K562 (cell line): ENCODE measurements at regions of chr11 and their contacts with region 1.

Region 1: GRCh38 chr11:66222358-66223149 is 45.9 kb upstream of the RAB1B start:
- DNase-seq: peak; percentile 88 to 95 (median 92)
- ATAC-seq: peak; percentile 97
- H3K4me3 ChIP-seq: no peak overlapping the region
- H3K27ac ChIP-seq: no peak overlapping the region; the same call in 2 of the 3 replicates
- H3K4me1 ChIP-seq: peaks cover 7 to 14% of the 10 kb centered on the region in 2 experiments; a peak in 3 of 5 replicates
- H3K27me3 ChIP-seq: no peaks in the 10 kb centered on the region
- CTCF ChIP-seq: peak; percentile 100
- EP300 ChIP-seq: peak; percentile 43; the same call in 1 of the 2 replicates
- POLR2A ChIP-seq: no peak
- RAD21 ChIP-seq: peak; percentile 92 to 97

Region 2: DNA sequence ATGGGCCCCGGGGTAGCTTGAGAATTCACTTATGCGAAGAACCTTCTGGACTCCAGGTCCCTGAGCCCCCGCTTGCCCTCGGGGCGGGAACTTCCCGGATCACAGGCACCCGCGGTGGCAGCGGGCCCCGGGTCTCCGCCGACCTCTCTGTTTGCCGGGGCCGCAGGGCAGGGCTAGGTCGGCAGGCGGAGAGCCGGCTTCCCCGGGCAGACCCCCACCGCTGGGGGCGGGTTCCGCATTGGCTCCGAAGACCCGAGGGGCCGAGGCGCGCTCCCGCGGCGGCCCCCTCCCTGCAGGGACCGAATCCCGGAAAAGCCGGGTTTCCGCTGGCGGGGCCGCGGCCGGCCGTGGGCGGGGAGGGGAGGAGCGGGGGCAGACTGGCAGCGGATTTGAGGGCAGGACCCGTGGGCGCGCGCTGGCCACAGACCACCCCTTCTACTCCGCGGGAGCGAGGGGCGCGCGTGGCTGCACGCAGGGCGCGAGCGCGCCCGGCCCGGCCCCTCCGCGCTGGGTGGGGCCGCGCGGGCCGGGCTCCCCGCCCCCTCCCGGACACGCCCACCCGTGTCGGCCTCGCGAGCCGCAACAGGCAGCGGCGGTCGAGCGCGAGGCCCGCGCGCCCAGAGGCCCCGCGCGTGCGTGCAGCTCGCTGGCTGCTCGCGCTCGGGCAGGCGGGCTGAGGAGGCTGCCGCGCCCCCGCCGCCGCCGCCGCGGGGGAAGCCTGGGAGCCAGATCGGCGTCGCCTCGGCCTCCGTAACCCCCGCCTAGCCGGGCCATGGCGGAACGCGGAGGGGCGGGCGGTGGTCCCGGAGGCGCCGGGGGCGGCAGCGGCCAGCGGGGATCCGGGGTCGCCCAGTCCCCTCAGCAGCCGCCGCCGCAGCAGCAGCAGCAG is 152.6 kb before region 1 on chr11 and contains the start of gene PACS1:
- CTCF ChIA-PET with region 1: no interaction called
- POLR2A ChIA-PET with region 1: no interaction called
- in situ Hi-C with region 1: no loop called
- intact Hi-C with region 1: no loop called
- DNase-seq: peak; percentile 77 to 92 (median 90)
- ATAC-seq: peak; percentile 74
- H3K4me3 ChIP-seq: peak within 1 kb of the TSS; percentile 72
- H3K27ac ChIP-seq: peak within 1 kb of the TSS; percentile 73
- H3K4me1 ChIP-seq: peaks cover 19 to 31% of the 10 kb centered on the region in 2 experiments
- H3K27me3 ChIP-seq: no peaks in the 10 kb centered on the region
- CTCF ChIP-seq: no peak
- EP300 ChIP-seq: no peak
- POLR2A ChIP-seq: peak; percentile 61
- RAD21 ChIP-seq: no peak
- polyA plus RNA-seq, gene PACS1: 0.34 to 0.38 TPM

Region 3: DNA sequence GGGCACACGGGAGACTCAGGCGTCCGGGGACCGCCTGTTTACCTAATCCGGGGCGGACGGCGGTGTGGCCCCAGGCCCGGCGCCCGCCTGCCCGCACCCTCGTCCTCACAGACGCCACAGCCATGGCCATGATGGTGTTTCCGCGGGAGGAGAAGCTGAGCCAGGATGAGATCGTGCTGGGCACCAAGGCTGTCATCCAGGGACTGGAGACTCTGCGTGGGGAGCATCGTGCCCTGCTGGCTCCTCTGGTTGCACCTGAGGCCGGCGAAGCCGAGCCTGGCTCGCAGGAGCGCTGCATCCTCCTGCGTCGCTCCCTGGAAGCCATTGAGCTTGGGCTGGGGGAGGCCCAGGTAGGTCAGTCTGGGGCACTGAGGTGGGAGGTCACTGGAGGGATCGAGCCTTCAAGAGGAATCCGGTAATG is 35.9 kb after region 1 on chr11:
- CTCF ChIA-PET with region 1: interaction called, 4 read pairs
- POLR2A ChIA-PET with region 1: interaction called, 3 read pairs
- in situ Hi-C with region 1: no loop called
- intact Hi-C with region 1: loop called (anchors 1 kb)
- DNase-seq: no peak
- ATAC-seq: no peak
- H3K4me3 ChIP-seq: peak overlapping the region; percentile 100
- H3K27ac ChIP-seq: peak overlapping the region; percentile 68
- H3K4me1 ChIP-seq: peaks cover 10 to 23% of the 10 kb centered on the region in 2 experiments; a peak in 4 of 5 replicates
- H3K27me3 ChIP-seq: no peaks in the 10 kb centered on the region
- CTCF ChIP-seq: peak in 1 of 3 experiments; percentile 48; a peak in 1 of 6 replicates
- EP300 ChIP-seq: no peak
- POLR2A ChIP-seq: no peak
- RAD21 ChIP-seq: no peak

Region 4: DNA sequence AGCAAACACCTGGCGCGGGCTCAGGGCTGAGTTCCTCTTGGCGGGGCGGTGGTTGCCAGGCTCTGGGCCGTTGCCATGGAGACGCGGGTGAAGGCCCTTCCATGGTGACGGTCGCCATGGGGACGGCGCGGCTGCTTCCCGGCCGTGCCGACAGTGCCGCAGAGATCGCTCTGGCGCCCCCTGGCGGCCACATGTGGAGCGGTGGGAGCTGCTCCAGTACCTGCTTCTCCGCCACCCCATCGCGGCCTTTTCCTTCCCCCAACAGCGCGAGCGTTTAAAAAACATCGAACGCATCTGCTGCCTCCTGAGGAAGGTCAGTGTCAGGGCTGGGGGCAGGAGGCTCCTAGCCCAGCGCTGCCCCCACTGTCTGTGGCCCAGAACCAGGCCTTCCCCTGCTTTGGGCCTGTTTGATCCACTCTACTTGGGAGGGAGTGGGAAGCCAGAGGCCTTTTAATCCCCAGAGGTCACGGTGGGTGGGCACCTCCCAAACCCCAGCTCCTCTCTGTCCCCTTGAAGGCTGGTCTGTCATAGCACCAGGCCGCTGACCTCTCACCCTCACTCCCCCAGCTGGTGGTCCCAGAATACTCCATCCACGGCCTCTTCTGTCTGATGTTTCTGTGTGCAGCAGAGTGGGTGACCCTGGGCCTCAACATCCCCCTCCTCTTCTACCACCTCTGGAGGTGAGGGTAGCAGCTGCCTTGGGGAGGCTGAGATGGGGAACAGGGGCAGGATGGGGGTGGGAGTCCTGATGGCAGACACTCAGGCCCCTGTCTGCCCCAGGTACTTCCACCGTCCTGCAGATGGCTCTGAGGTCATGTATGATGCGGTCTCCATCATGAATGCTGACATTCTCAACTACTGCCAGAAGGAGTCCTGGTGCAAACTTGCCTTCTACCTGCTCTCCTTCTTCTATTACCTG is 60.2 kb after region 1 on chr11:
- CTCF ChIA-PET with region 1: interaction called, 17 read pairs
- POLR2A ChIA-PET with region 1: interaction called, 3 read pairs
- in situ Hi-C with region 1: no loop called
- intact Hi-C with region 1: no loop called
- DNase-seq: peak; percentile 96 to 98 (median 96)
- ATAC-seq: peak; percentile 96
- H3K4me3 ChIP-seq: no peak overlapping the region
- H3K27ac ChIP-seq: no peak overlapping the region
- H3K4me1 ChIP-seq: peaks cover 8 to 52% of the 10 kb centered on the region in 2 experiments; a peak in 3 of 5 replicates
- H3K27me3 ChIP-seq: no peaks in the 10 kb centered on the region
- CTCF ChIP-seq: peak; percentile 91 to 97 (median 97)
- EP300 ChIP-seq: 0 out of 2 replicates have a peak, but pooled peaks have one; percentile 19
- POLR2A ChIP-seq: peak; percentile 31; the same call in 1 of the 2 replicates
- RAD21 ChIP-seq: peak; percentile 62 to 68

Region 5: GRCh38 chr11:66288671-66289547 is 66.4 kb after region 1 on chr11 and contains the start of gene YIF1A:
- CTCF ChIA-PET with region 1: interaction called, 17 read pairs
- POLR2A ChIA-PET with region 1: interaction called, 3 read pairs
- in situ Hi-C with region 1: no loop called
- intact Hi-C with region 1: loop called (anchors 2 kb)
- DNase-seq: peak; percentile 96 to 100 (median 98)
- ATAC-seq: peak; percentile 98
- H3K4me3 ChIP-seq: peak within 1 kb of the TSS; percentile 84
- H3K27ac ChIP-seq: peak within 1 kb of the TSS; percentile 80
- H3K4me1 ChIP-seq: peaks cover 19 to 61% of the 10 kb centered on the region in 2 experiments
- H3K27me3 ChIP-seq: no peaks in the 10 kb centered on the region
- CTCF ChIP-seq: peak in 2 of 3 experiments; percentile 30 to 39; a peak in 4 of 6 replicates
- EP300 ChIP-seq: no peak
- POLR2A ChIP-seq: peak; percentile 91
- RAD21 ChIP-seq: no peak; a peak in 1 of 4 replicates
- polyA plus RNA-seq, gene YIF1A: 8.6 to 33.6 TPM

Region 6: GRCh38 chr11:66328307-66329144 is 106.0 kb after region 1 on chr11:
- CTCF ChIA-PET with region 1: interaction called, 16 read pairs
- POLR2A ChIA-PET with region 1: interaction called, 3 read pairs
- in situ Hi-C with region 1: loop called (anchors 5 kb)
- intact Hi-C with region 1: loop called (anchors 2 kb)
- DNase-seq: peak; percentile 85 to 89 (median 86)
- ATAC-seq: peak; percentile 94
- H3K4me3 ChIP-seq: no peak overlapping the region
- H3K27ac ChIP-seq: peak overlapping the region; percentile 75
- H3K4me1 ChIP-seq: peaks cover 20 to 70% of the 10 kb centered on the region in 2 experiments; a peak in 4 of 5 replicates
- H3K27me3 ChIP-seq: no peaks in the 10 kb centered on the region
- CTCF ChIP-seq: peak; percentile 92 to 95 (median 94)
- EP300 ChIP-seq: no peak
- POLR2A ChIP-seq: no peak
- RAD21 ChIP-seq: peak; percentile 86 to 90